Activated T-helper 1 cell treated with anti-CD3 and anti-CD28 coated beads, Interleukin-12 subunit alpha, Interleukin-12 subunit beta, Interleukin-2, Interleukin-4 antibody, amounts not matched to agents 30 ng/mL and 10 ng/mL and 1 ng/mL, durations not matched to agents 14 hours and 24 hours and 36 hours (primary cell): ENCODE measurements at regions of chr4 and their contacts with region 1.

Region 1: DNA sequence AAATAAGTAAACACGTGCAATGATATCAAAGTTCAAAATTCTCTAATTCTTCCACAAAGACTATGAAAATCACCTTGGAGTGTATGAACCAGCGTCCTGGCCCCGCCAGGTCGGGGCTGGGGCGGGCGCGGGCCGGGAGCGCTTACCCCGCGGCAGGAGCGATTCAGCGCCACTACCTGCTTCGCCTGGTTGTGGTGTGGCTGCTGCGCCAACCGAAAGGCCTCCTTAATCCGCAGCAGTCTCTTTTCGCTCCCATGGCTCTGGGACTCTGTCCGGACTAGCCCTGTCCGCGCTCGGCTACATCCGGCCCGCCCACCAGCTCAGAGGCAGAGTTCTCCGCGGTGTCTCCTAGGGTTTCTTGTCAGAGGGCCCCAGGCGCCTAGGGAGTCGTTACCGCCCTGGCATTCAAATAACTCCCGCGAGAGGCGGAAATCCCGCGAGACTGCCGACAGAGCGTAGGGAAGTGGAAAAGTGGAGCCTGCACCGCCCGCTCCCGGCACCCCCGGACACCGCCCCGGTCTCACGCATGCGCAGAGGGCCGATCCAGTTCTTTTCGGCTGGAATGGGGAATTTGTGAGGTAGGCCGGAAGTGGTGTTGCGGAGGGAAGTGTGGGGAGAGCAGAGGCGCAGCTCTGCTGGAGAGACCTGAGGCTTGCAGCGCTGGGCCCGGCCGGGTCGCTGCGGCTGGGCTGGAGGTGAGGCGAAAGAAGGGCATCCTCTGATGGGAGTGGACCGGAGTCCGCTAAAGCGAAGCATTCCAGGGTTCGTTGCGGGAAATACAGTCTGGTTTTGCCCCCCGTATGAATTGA is at the start of gene FAM200B:
- DNase-seq: peak; percentile 97
- H3K4me3 Mint-ChIP-seq: peak within 1 kb of the TSS; percentile 97
- H3K27ac Mint-ChIP-seq: peak within 1 kb of the TSS; percentile 94
- H3K4me1 Mint-ChIP-seq: peaks cover 45% of the 10 kb centered on the region
- H3K27me3 Mint-ChIP-seq: no peaks in the 10 kb centered on the region
- total RNA-seq, gene FAM200B: 5.5 and 6.6 TPM in 2 replicates

Region 2: DNA sequence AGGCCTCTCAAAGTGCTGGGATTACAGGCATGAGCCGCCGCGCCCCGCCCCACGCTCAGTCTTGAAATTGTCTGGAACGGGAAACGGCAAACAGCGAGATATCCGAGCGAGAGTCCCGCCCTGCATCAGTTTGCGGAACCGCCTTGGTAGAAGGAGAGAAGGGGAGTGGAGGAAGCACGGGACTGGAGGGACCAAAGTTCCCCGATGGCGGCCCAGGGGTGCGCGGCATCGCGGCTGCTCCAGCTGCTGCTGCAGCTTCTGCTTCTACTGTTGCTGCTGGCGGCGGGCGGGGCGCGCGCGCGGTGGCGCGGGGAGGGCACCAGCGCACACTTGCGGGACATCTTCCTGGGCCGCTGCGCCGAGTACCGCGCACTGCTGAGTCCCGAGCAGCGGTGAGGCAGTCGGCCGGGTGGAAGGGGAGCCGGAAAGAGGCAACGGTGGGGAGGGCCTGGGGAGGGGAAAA is 21.6 kb after region 1 on chr4 and contains the start of gene BST1:
- intact Hi-C with region 1: loop called (anchors 1 kb)
- DNase-seq: peak; percentile 41
- H3K4me3 Mint-ChIP-seq: peak within 1 kb of the TSS; percentile 87
- H3K27ac Mint-ChIP-seq: no peak within 1 kb of the TSS
- H3K4me1 Mint-ChIP-seq: no peaks in the 10 kb centered on the region
- H3K27me3 Mint-ChIP-seq: peaks cover 25% of the 10 kb centered on the region
- total RNA-seq, gene BST1: 0.81 and 0.93 TPM in 2 replicates

Region 3: GRCh38 chr4:15738877-15739276 is 57.5 kb after region 1 on chr4:
- intact Hi-C with region 1: loop called (anchors 5 kb)
- DNase-seq: no peak
- H3K4me3 Mint-ChIP-seq: peak overlapping the region; percentile 35
- H3K27ac Mint-ChIP-seq: peak overlapping the region; percentile 85
- H3K4me1 Mint-ChIP-seq: peaks cover 51% of the 10 kb centered on the region
- H3K27me3 Mint-ChIP-seq: no peaks in the 10 kb centered on the region

Region 4: DNA sequence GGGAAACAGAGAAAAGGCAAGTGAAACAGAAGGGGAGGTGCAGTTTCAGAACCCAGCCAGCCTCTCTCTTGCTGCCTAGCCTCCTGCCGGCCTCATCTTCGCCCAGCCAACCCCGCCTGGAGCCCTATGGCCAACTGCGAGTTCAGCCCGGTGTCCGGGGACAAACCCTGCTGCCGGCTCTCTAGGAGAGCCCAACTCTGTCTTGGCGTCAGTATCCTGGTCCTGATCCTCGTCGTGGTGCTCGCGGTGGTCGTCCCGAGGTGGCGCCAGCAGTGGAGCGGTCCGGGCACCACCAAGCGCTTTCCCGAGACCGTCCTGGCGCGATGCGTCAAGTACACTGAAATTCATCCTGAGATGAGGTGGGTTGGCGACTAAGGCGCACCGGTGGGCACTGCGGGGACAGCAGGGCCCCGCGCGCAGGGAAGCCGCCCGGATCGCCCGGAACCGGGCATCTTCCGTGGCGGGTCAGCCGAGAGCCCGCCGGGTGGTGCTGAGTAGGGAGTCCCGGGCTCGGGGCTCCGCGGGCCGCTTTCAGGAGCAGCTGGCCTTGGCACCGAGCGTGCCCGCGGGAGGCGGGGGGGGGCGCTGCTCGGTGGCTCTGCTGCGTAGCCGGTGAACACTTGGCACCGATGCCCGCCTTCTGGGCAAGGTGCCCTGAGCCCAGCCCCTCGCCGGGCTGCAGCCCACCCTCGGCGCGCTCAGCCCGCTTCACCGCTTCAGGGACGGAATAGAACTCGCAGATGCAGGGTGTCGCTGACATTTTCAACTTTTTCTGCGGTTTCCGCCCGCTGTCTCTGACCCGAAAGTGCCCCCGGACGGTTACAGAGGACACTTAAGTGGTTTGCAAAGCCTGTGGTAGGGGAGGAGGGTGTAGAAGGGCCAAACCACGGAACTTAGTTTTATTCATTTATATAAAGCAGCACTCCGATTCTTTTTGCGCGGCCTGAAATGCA is 97.2 kb after region 1 on chr4 and contains the start of gene CD38:
- intact Hi-C with region 1: loop called (anchors 1 kb)
- DNase-seq: peak; percentile 64
- H3K4me3 Mint-ChIP-seq: peak within 1 kb of the TSS; percentile 93
- H3K27ac Mint-ChIP-seq: peak within 1 kb of the TSS; percentile 92
- H3K4me1 Mint-ChIP-seq: peaks cover 86% of the 10 kb centered on the region
- H3K27me3 Mint-ChIP-seq: no peaks in the 10 kb centered on the region
- total RNA-seq, gene CD38: 148 and 152 TPM in 2 replicates

Region 5: DNA sequence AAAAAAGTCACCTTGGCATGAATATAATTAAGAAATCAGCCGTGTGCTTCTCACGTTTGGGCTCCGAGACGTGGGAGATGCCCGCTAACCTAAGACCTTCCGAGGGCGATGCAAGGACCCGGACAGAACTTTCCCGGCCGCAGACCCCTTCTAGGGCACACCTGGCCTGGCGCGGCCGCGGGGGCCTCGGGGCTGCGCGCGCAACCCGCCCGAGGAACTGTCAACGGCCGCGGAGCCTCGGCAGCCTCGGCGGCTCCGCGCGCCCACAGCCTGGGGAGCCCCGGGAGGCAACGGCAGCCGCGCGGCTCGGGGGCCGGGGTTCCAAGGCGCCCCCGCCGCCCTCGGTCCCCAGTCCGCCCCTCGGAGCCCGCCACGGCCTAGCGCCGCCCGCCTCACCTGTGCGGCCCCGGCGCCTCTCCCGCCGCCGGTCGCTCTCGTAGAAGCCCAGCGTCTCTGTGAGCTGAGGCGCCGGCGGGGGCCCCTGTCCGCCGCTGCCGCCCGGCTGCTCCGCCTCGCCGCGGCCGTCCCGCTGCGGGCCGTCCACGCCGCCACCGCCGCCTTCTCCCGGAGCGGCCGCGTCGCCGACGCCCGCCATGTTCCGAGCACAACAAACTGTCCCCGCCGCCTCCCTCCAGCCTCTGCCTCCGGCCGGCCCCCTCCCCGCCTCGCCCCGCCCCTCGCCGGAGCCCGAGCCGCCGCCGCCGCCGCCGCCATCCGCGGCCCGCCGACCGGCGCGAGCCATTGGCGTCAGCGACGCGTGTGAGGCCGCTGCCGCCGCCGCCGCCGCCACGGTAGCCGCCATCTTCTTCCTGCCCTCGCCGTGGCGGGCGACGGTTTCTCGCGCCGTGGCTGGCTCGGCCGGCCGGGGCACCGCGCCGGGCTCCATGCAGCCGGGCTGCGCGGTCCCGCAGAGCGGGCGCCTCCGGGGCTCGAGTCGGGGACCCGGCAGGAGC is 544.7 kb after region 1 on chr4 and contains the start of gene TAPT1:
- intact Hi-C with region 1: loop called (anchors 5 kb)
- DNase-seq: peak; percentile 78
- H3K4me3 Mint-ChIP-seq: peak within 1 kb of the TSS; percentile 97
- H3K27ac Mint-ChIP-seq: peak within 1 kb of the TSS; percentile 96
- H3K4me1 Mint-ChIP-seq: peaks cover 60% of the 10 kb centered on the region
- H3K27me3 Mint-ChIP-seq: no peaks in the 10 kb centered on the region
- total RNA-seq, gene TAPT1: 26.0 and 31.8 TPM in 2 replicates